ENCODE measurements at regions of chr2 and their contacts with region 1.

Region 1: GRCh38 chr2:137865954-137866540 is 98.2 kb upstream of the HNMT start:
- DNase-seq: peak; percentile 76
- H3K4me3 Mint-ChIP-seq: no peak overlapping the region
- H3K27ac Mint-ChIP-seq: no peak overlapping the region
- H3K4me1 Mint-ChIP-seq: no peaks in the 10 kb centered on the region
- H3K27me3 Mint-ChIP-seq: peaks cover 7% of the 10 kb centered on the region

Region 2: GRCh38 chr2:138373993-138374408 is 508.0 kb after region 1 on chr2:
- CTCF ChIA-PET with region 1: interaction called, 4 read pairs
- intact Hi-C with region 1: loop called (anchors 1 kb)
- DNase-seq: no peak
- H3K4me3 Mint-ChIP-seq: no peak overlapping the region
- H3K27ac Mint-ChIP-seq: no peak overlapping the region
- H3K4me1 Mint-ChIP-seq: no peaks in the 10 kb centered on the region
- H3K27me3 Mint-ChIP-seq: peaks cover 5% of the 10 kb centered on the region

Region 3: DNA sequence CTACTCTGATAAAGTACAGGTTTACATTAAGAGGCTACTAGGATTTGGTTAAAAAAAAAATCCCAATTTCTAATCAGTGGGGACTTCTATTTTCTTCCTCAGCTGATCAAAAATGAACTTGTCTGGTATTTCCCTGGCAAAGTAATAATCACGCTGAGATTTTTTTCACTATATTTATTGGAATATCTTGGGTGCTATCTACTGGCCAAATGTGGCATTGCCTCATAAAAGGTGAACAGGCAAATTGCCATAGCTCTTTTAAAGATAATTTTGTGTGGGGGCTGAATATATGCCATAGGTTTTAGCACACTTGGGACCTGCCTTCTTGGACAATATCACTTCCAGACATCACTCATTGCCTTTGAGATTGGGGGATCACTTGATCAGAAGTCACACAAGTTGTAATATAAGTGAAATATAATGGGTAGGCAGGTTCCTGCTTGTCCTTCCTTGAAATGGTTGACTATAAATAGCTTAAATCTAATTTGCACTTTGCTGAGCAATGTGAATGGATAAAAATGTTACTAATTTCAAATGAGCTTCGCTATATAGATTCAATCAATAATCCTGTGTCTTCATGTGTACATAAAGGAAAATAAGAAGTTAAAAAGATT is 921.1 kb after region 1 on chr2:
- CTCF ChIA-PET with region 1: interaction called, 7 read pairs
- intact Hi-C with region 1: loop called (anchors 1 kb)
- DNase-seq: peak; percentile 6
- H3K4me3 Mint-ChIP-seq: no peak overlapping the region
- H3K27ac Mint-ChIP-seq: no peak overlapping the region
- H3K4me1 Mint-ChIP-seq: no peaks in the 10 kb centered on the region
- H3K27me3 Mint-ChIP-seq: peaks cover 13% of the 10 kb centered on the region